ENCODE measurements at regions of chr16 and their contacts with region 1.

Region 1: GRCh38 chr16:68377670-68378393 is 67.0 kb downstream of the PRMT7 start:
- DNase-seq: no peak
- ATAC-seq: no peak
- H3K4me3 ChIP-seq: no peak overlapping the region
- H3K27ac ChIP-seq: no peak overlapping the region
- H3K4me1 ChIP-seq: no peaks in the 10 kb centered on the region
- CTCF ChIP-seq: no peak
- EP300 ChIP-seq: no peak
- POLR2A ChIP-seq: no peak
- RAD21 ChIP-seq: no peak

Region 2: GRCh38 chr16:68345351-68345810 is 32.5 kb before region 1 on chr16:
- CTCF ChIA-PET with region 1: no interaction called
- POLR2A ChIA-PET with region 1: no interaction called
- DNase-seq: no peak
- ATAC-seq: no peak
- H3K4me3 ChIP-seq: no peak overlapping the region
- H3K27ac ChIP-seq: no peak overlapping the region
- H3K4me1 ChIP-seq: no peaks in the 10 kb centered on the region
- CTCF ChIP-seq: no peak
- EP300 ChIP-seq: no peak
- POLR2A ChIP-seq: no peak
- RAD21 ChIP-seq: no peak

Region 3: GRCh38 chr16:68367030-68367429 is 10.8 kb before region 1 on chr16:
- CTCF ChIA-PET with region 1: interaction called, 21 read pairs
- POLR2A ChIA-PET with region 1: no interaction called
- DNase-seq: peak; percentile 52 to 58
- ATAC-seq: peak in 1 of 2 experiments; percentile 68; a peak in 3 of 6 replicates
- H3K4me3 ChIP-seq: no peak overlapping the region
- H3K27ac ChIP-seq: no peak overlapping the region
- H3K4me1 ChIP-seq: no peaks in the 10 kb centered on the region
- CTCF ChIP-seq: peak; percentile 48; the same call in 2 of the 3 replicates
- EP300 ChIP-seq: no peak
- POLR2A ChIP-seq: no peak
- RAD21 ChIP-seq: peak in 1 of 2 experiments; percentile 41; a peak in 2 of 5 replicates

Region 4: DNA sequence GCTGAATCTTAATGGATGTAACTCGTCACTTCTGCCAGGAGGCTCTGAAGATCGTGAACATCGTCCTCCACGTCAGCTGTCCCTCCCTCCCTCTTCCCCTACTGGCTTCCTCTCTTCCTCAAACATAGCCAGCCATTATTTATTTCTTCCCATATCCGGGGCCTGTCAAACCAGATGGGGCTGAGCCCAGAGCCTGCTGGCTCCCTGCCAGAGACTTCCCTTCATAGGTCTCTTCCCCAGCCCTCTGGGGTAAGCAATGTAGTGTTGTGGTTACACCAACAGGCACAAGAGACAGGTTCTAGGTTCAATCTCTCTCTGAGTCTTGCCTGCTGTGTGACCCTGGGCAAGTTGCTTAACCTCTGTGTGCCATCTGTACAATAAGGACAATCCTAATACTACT is 121.2 kb after region 1 on chr16:
- CTCF ChIA-PET with region 1: no interaction called
- POLR2A ChIA-PET with region 1: no interaction called
- DNase-seq: no peak
- ATAC-seq: no peak
- H3K4me3 ChIP-seq: no peak overlapping the region
- H3K27ac ChIP-seq: no peak overlapping the region
- H3K4me1 ChIP-seq: no peaks in the 10 kb centered on the region
- CTCF ChIP-seq: no peak
- EP300 ChIP-seq: no peak
- POLR2A ChIP-seq: no peak
- RAD21 ChIP-seq: no peak